ENCODE measurements at regions of chr4 and their contacts with region 1.

Region 1: DNA sequence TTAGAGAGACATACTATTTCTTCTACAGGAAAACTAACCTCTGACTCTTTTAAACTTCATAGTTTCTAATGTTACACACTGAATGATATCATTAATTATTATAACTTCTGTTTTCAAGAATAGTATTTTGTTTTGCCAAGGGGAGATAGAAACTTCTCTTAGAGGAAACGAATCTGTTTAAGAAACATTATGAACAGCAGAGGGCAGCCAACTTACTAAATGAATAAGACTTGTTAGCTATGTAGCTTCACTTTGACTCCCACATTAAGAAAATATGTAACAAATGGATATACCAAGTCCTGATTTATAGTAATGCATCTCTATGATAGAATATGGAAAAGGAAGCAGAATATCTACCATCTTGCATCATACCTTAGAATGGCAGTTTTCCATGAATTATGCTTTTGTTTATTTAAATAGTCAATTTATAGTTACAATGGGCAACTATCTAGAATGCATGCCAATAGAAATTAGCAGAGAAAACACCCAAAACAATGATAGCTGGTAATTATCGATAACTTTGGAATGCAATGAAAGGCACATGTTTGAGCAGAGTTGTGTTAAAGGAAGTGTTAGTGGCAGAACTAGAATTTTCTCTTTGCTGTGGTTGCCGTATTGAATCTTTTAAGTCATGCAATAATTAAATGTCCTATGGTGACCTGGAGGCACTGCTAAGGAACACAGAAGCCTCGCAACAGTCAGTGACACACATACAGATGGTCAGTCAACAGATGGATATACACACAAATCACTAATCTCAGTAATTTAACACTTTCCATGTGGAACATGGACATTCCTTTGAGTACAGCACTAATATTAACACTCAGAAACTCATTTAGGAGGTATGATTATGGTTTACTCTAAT is 105.7 kb upstream of the PDLIM3 start:
- DNase-seq: no peak
- H3K4me3 Mint-ChIP-seq: no peak overlapping the region
- H3K27ac Mint-ChIP-seq: no peak overlapping the region
- H3K4me1 Mint-ChIP-seq: peaks cover 3% of the 10 kb centered on the region
- H3K27me3 Mint-ChIP-seq: peaks cover 39% of the 10 kb centered on the region

Region 2: GRCh38 chr4:185716577-185717376 is 75.7 kb after region 1 on chr4:
- CTCF ChIA-PET with region 1: no interaction called
- POLR2A ChIA-PET with region 1: no interaction called
- intact Hi-C with region 1: no loop called
- DNase-seq: no peak
- H3K4me3 Mint-ChIP-seq: no peak overlapping the region
- H3K27ac Mint-ChIP-seq: no peak overlapping the region
- H3K4me1 Mint-ChIP-seq: no peaks in the 10 kb centered on the region
- H3K27me3 Mint-ChIP-seq: peaks cover 9% of the 10 kb centered on the region

Region 3: GRCh38 chr4:186037692-186038658 is 396.9 kb after region 1 on chr4:
- CTCF ChIA-PET with region 1: interaction called, 36 read pairs
- POLR2A ChIA-PET with region 1: no interaction called
- intact Hi-C with region 1: loop called (anchors 1 kb)
- DNase-seq: peak; percentile 13
- H3K4me3 Mint-ChIP-seq: no peak overlapping the region
- H3K27ac Mint-ChIP-seq: no peak overlapping the region
- H3K4me1 Mint-ChIP-seq: no peaks in the 10 kb centered on the region
- H3K27me3 Mint-ChIP-seq: peaks cover 17% of the 10 kb centered on the region

Measured in activated CD4-positive, alpha-beta memory T cell treated with anti-CD3 and anti-CD28 coated beads for 36 hours (primary cell).